ENCODE measurements at regions of chr5 and their contacts with region 1.

Region 1: DNA sequence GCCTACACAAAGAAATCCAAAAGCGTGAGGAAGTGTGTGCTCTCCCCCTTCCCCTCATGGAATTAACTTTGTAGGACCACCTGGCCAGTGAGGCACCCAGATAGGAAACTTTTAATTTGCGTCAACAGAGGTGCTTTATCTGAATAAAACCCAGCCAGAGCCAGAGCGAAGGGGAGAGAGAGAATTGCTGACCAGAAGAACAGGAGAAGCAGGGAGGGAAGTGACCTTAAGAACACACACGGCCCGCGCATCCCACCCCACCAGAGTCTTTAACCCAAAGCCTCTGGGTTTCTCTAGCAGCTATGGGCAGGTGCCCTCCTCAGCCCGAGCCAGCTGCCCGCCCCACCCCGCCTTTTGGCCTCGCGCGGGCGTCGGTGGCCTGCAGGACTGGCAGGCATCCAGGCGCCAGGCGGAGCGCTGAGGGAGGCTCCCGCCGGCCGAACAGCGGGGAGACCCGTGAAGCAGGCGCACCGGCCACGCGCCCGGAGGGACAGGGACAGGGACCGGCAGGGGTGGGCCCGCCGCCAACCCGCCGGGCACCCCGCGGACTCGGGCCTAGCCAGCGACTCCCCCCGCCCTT is 580 bp downstream of the ERAP1 start:
- DNase-seq: peak; percentile 77
- H3K4me3 Mint-ChIP-seq: peak overlapping the region; percentile 99
- H3K27ac Mint-ChIP-seq: peak overlapping the region; percentile 100
- H3K4me1 Mint-ChIP-seq: peaks cover 21% of the 10 kb centered on the region
- H3K27me3 Mint-ChIP-seq: no peaks in the 10 kb centered on the region
- CTCF ChIP-seq: no peak

Region 2: DNA sequence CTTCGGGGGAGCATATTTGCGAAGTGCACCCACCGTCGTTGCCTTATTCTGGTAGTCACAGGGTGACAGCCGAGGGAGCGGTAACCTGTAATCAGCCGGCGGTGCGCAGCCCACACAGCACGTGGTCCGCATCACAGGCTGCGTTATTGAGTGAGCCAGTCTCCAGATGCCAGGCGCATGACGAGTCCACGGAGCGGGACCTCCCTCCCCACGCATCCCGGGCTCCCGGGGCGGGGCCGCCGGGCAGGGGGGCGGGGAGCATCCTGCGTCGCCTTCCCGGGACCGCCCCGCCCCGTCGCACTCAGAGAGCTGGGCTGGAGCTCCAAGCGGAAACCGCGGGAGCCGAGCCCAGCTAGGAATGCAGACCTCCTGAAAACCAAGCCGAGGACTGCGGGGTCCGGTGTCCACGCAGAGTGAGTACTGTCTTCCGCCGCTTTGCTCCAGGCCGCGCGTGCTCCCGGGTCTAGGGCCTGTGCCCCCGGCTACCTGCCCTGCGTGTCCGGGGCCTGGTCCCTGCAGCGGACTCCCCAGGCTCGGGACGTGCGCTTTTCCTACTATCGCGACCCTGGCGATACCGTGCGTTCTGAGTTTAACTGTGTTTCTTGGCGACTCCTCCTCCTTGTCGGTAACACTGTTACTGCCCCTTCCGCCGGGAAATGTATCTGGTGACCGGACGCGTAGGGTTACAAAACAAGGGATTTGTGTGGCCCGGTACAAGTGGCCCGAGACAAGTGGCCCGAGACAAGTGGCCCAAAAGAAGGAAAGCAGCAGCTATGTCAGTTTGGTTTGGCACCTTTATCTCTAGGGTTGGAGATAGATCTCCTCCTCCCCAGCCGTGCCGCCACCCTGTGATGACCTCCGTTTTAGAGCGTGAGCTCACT is 104.4 kb before region 1 on chr5:
- CTCF ChIA-PET with region 1: no interaction called
- POLR2A ChIA-PET with region 1: interaction called, 10 read pairs
- intact Hi-C with region 1: no loop called
- DNase-seq: peak; percentile 91
- H3K4me3 Mint-ChIP-seq: peak overlapping the region; percentile 82
- H3K27ac Mint-ChIP-seq: peak overlapping the region; percentile 97
- H3K4me1 Mint-ChIP-seq: peaks cover 56% of the 10 kb centered on the region
- H3K27me3 Mint-ChIP-seq: no peaks in the 10 kb centered on the region
- CTCF ChIP-seq: no peak

Region 3: DNA sequence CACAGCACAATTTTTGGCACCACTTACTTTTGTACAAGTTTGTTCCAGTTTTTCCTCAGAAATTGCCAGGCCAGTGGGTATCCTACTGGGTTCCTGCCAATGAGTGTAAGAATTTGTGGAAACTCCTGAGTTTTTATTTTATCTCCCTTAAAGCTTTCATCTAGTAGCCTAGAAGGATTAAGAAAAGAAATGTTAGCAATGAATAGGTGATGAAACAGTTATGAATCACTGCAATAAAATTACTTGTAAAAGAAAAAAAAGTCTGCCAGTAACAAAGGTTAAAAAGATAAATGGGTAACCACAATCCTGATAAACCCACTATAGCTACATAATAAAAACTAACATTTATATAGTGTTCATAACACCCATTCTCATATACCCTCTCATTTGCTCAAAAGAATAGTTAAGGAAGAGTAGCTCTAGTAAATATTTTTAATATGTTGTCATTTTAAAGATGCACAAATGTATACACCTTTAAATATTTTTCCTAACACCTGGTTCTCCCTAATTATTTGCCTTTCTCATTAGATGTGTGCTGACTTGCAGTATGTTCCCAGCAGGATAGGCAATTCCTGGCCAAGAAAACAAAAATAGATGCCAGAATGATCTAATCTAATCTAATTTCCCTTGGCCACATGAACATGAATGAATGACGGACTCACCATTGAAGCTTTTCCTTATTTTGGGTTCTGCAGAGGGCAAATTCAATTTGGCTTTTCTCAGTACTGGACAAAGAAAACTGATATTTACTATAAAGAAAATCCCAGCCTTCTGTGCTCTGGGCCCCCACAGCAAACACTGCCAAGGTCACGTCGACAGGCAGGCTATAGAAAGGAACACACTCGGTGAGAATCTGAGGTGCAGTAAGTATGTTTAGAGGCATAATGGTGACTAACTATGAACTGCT is 25.9 kb before region 1 on chr5:
- CTCF ChIA-PET with region 1: no interaction called
- POLR2A ChIA-PET with region 1: interaction called, 13 read pairs
- intact Hi-C with region 1: no loop called
- DNase-seq: peak; percentile 69
- H3K4me3 Mint-ChIP-seq: no peak overlapping the region
- H3K27ac Mint-ChIP-seq: peak overlapping the region; percentile 76
- H3K4me1 Mint-ChIP-seq: peaks cover 18% of the 10 kb centered on the region
- H3K27me3 Mint-ChIP-seq: no peaks in the 10 kb centered on the region
- CTCF ChIP-seq: no peak

Region 4: DNA sequence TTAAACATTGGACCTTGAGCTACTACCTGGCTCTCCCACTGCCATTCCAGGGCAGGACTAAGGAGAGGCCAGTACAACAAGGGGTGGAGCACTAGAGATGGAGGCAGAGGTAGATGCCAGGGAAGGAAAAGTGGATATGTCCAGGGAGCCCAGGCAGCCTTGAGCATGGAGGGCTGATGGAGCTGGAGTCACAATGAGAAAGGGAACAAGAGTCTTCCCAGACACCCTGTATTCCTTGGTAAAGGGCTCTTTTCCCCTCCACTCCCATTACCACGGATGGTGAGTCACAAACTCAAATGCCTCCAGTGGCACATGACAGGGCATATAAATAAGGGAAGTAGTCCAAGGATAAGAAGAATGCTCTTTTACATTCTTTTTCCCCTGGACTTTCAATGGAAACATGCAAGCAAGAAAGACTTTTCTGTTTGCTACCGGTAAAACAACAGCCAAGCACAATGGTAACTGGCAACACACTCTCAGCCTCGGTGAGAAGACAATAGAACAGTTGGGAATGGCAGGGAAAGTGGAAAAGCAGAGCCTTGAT is 16.1 kb before region 1 on chr5:
- CTCF ChIA-PET with region 1: interaction called, 7 read pairs
- POLR2A ChIA-PET with region 1: interaction called, 13 read pairs
- intact Hi-C with region 1: no loop called
- DNase-seq: no peak
- H3K4me3 Mint-ChIP-seq: no peak overlapping the region
- H3K27ac Mint-ChIP-seq: peak overlapping the region; percentile 18
- H3K4me1 Mint-ChIP-seq: peaks cover 9% of the 10 kb centered on the region
- H3K27me3 Mint-ChIP-seq: no peaks in the 10 kb centered on the region
- CTCF ChIP-seq: no peak

Region 5: DNA sequence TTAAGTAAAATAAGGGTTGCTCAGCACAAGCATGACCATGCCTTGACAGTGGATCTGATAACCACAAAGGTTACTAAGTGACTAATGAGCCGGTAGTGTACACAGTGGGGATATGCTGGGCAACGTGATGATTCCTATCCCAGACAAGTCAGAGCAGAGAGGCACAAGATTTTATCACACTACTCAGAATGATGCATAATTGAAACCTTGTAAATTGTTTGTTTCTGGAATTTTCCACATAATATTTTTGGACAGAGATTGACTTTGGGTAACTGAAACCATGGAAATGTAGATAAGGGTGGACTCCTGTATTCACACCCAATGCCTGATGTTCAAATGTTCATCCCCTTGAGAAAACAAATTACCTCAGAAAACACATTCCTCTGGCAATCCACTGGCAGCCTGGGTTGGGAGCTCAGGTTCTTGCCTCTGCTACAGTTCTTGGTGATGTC is 16.8 kb after region 1 on chr5:
- CTCF ChIA-PET with region 1: interaction called, 3 read pairs
- POLR2A ChIA-PET with region 1: interaction called, 13 read pairs
- intact Hi-C with region 1: no loop called
- DNase-seq: peak; percentile 64
- H3K4me3 Mint-ChIP-seq: no peak overlapping the region
- H3K27ac Mint-ChIP-seq: no peak overlapping the region
- H3K4me1 Mint-ChIP-seq: peaks cover 5% of the 10 kb centered on the region
- H3K27me3 Mint-ChIP-seq: no peaks in the 10 kb centered on the region
- CTCF ChIP-seq: no peak

Region 6: DNA sequence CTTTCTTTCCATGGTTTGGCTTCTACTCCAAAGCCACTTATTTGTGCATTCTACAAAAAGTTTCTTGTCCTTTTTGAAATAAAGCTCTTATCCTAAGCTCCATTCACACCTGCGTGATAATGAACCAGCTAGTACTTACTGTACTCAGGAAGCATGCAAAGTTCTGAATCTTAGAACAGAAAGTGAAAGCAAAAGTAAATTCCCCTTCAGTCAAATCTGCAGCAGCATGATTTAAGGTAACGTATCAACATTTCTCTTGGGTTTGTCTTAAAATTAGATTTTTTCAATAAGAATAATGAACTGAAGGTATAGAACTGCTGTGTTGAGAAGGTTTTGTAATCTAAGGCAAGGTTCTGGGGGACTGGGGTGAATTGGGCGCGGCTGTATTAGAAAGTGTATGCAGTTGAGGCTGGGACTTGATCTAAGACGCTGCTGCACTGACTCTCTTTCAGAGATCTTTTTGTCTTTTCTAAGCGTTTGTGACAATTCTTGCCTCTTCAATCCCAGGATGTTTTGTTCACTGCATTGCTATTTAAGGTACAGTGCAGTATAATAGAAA is 69.2 kb after region 1 on chr5 and contains the start of gene ERAP2:
- CTCF ChIA-PET with region 1: interaction called, 4 read pairs
- POLR2A ChIA-PET with region 1: interaction called, 40 read pairs
- intact Hi-C with region 1: loop called (anchors 5 kb)
- DNase-seq: peak; percentile 50
- H3K4me3 Mint-ChIP-seq: peak within 1 kb of the TSS; percentile 81
- H3K27ac Mint-ChIP-seq: peak within 1 kb of the TSS; percentile 95
- H3K4me1 Mint-ChIP-seq: peaks cover 37% of the 10 kb centered on the region
- H3K27me3 Mint-ChIP-seq: no peaks in the 10 kb centered on the region
- CTCF ChIP-seq: no peak
- total RNA-seq, gene ERAP2: 2.5 and 3.9 TPM in 2 replicates

Region 7: DNA sequence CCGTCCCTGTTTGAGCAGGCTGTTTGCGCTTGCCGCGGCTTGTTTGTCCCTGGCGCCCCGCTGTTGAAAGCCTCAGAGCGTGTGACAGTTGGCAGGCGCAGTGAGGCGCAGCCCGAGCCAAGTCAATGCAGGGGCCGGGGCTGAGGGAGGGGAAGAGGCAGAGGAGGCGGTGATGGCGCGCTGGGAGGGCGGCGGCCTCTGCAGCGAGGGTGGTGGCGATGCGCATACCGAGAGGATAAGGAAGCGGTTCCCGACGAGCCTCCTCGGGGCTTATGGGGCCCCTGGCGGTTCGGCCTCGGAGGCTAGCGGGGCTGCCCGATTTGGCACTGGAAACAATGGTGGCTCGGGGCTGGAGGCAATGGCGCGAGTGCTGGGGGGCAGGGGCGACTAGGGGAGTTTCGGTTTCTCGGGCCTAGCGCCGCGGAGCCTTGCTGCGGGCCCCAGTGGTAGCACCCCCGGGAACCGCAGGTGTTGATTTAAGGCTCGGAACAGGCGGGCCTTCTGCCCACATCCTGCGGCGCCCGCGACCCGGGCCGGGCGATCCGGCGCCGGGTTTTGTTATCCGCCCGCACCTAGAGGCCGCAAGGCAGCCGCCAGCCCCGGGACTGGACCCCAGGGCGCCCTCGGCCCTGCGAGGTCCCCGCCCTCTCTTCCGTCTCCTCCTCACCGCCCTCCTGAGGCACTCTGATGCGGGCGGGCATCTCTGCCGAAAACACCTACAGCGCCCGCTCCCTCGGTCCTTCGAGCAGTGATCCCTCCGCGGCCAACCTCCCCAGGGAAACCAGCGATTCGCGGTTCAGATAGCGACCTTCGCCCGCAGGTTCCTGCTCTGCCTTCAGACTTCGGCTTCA is 127.8 kb after region 1 on chr5:
- CTCF ChIA-PET with region 1: no interaction called
- POLR2A ChIA-PET with region 1: interaction called, 30 read pairs
- intact Hi-C with region 1: loop called (anchors 1 kb)
- DNase-seq: peak; percentile 96
- H3K4me3 Mint-ChIP-seq: peak overlapping the region; percentile 96
- H3K27ac Mint-ChIP-seq: peak overlapping the region; percentile 82
- H3K4me1 Mint-ChIP-seq: peaks cover 23% of the 10 kb centered on the region
- H3K27me3 Mint-ChIP-seq: no peaks in the 10 kb centered on the region
- CTCF ChIP-seq: no peak

Region 8: DNA sequence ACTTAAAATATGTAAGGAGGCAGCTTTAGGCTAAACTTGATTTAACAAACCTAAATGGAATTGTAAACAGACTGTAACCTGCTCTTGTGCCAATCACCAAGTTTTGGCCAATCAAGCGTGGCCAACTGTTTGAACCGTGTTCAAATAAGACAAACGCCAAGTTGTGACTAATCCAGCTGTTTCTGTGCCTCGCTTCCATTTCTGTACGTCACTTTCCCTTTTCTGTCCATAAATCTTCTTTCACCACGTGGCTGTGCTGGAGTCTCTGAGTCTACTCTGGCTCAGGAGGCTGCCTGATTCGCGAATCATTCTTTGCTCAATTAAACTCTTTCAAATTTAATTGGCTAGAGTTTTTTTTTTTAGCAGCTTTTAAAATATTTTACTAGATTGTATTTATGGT is 263.9 kb after region 1 on chr5:
- CTCF ChIA-PET with region 1: no interaction called
- POLR2A ChIA-PET with region 1: no interaction called
- intact Hi-C with region 1: no loop called
- DNase-seq: peak; percentile 70
- H3K4me3 Mint-ChIP-seq: no peak overlapping the region
- H3K27ac Mint-ChIP-seq: no peak overlapping the region
- H3K4me1 Mint-ChIP-seq: no peaks in the 10 kb centered on the region
- H3K27me3 Mint-ChIP-seq: no peaks in the 10 kb centered on the region
- CTCF ChIP-seq: no peak

Region 9: GRCh38 chr5:97094579-97095317 is 287.6 kb after region 1 on chr5:
- CTCF ChIA-PET with region 1: no interaction called
- POLR2A ChIA-PET with region 1: no interaction called
- intact Hi-C with region 1: no loop called
- DNase-seq: no peak
- H3K4me3 Mint-ChIP-seq: no peak overlapping the region
- H3K27ac Mint-ChIP-seq: no peak overlapping the region
- H3K4me1 Mint-ChIP-seq: no peaks in the 10 kb centered on the region
- H3K27me3 Mint-ChIP-seq: peaks cover 12% of the 10 kb centered on the region
- CTCF ChIP-seq: no peak

Measured in MCF 10A (cell line).